Activated naive CD4-positive, alpha-beta T cell treated with anti-CD3 and anti-CD28 coated beads for 36 hours (primary cell): ENCODE measurements at regions of chr18 and their contacts with region 1.

Region 1: GRCh38 chr18:3645384-3646156 is 195.6 kb downstream of the TGIF1 start:
- DNase-seq: no peak
- H3K4me3 Mint-ChIP-seq: no peak overlapping the region
- H3K27ac Mint-ChIP-seq: no peak overlapping the region
- H3K4me1 Mint-ChIP-seq: peaks cover 32% of the 10 kb centered on the region
- H3K27me3 Mint-ChIP-seq: no peaks in the 10 kb centered on the region

Region 2: GRCh38 chr18:2258954-2259353 is 1386.6 kb before region 1 on chr18:
- CTCF ChIA-PET with region 1: no interaction called
- intact Hi-C with region 1: no loop called
- DNase-seq: no peak
- H3K4me3 Mint-ChIP-seq: no peak overlapping the region
- H3K27ac Mint-ChIP-seq: no peak overlapping the region
- H3K4me1 Mint-ChIP-seq: no peaks in the 10 kb centered on the region
- H3K27me3 Mint-ChIP-seq: no peaks in the 10 kb centered on the region

Region 3: DNA sequence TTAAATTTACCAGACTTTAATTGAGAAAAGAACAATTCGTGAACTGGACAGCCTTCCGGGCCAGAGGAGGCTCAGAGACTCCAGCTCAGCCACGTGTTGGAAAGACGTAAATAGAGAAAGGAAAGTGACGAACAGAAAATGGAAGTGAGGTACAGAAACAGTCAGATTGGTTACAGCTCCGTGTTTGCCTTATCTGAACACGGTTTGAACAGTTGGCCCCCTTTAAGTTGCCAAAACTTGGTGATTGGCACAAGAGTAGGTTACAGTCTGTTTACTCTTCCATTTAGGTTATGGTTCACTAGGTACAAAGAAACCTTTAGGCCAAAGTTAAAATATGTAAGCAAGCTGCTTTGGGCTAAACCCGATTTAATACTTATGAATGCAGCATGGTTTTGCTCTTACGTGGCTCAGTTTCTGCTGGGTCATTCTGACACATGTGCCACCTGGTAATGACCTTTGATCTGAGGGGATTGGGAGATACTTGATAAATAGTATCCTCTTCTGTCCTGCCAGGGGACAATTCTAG is 260.8 kb before region 1 on chr18:
- CTCF ChIA-PET with region 1: no interaction called
- intact Hi-C with region 1: no loop called
- DNase-seq: no peak
- H3K4me3 Mint-ChIP-seq: no peak overlapping the region
- H3K27ac Mint-ChIP-seq: no peak overlapping the region
- H3K4me1 Mint-ChIP-seq: peaks cover 6% of the 10 kb centered on the region
- H3K27me3 Mint-ChIP-seq: no peaks in the 10 kb centered on the region

Region 4: GRCh38 chr18:3634250-3634939 is 11.2 kb before region 1 on chr18:
- CTCF ChIA-PET with region 1: interaction called, 7 read pairs
- intact Hi-C with region 1: loop called (anchors 1 kb)
- DNase-seq: no peak
- H3K4me3 Mint-ChIP-seq: no peak overlapping the region
- H3K27ac Mint-ChIP-seq: no peak overlapping the region
- H3K4me1 Mint-ChIP-seq: peaks cover 33% of the 10 kb centered on the region
- H3K27me3 Mint-ChIP-seq: no peaks in the 10 kb centered on the region